ENCODE measurements at regions of chr7 and their contacts with region 1.

Region 1: DNA sequence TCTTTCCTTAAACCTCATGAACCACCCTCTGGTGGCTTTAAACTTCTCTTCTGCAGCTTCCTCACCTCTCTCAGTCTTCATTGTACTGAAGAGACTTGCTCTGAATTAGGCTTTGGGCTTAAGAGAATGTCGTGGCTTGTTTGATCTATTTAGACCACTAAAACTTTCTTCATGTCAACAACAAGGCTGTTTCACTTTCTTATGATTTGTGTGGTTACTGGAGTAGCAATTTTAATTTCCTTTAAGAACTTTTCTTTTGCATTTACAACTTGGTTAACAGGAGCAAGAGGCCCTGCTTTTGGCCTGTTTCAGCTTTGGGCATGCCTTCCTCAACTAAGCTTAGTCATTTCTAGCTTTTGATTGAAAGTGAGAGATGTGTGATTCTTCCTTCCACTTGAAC is 38.1 kb upstream of the CDHR3 start:
- DNase-seq: peak; percentile 46
- ATAC-seq: peak; percentile 92
- H3K4me3 Mint-ChIP-seq: no peak overlapping the region
- H3K27ac Mint-ChIP-seq: peak overlapping the region; percentile 88
- H3K4me1 Mint-ChIP-seq: peaks cover 27% of the 10 kb centered on the region
- H3K27me3 Mint-ChIP-seq: peaks cover 7% of the 10 kb centered on the region

Region 2: DNA sequence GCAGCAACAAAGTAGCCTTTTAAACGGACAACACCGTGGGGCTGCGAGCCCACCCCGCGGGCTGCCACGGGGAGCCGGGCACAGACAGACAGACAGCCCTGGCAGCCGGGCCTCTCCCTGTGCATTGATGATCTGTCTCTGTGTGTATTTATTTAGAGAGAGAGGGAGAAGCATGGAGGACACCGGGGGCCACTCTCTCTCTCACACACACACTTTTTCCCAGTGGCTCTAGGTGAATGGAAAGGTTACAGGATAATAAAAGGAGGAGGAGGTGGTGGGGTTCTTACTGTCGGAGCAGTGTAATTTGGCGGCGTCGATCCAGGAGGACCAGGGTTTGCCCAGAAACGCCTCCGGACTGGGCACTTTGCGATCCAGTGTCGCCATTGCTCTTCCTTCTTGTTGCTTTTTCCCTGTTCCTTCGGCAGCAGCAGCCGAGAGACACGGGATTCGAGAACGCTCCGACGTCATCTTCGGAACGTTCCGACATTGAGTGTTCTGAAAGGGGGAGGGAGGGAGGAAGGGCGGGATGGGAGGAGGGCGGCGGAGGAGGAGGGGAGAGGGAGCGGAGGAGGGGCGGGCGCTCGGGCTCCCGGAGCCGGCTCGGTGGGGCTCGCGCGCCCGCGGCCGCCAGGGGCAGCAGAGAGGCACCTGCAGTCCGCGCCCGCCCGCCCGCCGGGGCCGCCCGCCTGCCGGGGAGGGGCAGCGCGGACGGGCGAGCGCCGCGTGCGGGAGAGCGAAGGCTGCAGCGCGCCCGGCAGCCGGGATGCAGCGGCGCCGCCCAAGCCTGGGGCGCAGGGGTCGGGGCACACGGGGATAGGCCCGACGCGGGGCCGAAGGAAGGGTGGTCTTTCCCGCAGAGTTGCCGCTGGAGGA is 48.6 kb before region 1 on chr7 and contains the start of gene ATXN7L1:
- CTCF ChIA-PET with region 1: interaction called, 14 read pairs
- POLR2A ChIA-PET with region 1: no interaction called
- DNase-seq: peak; percentile 90
- ATAC-seq: peak; percentile 97
- H3K4me3 Mint-ChIP-seq: peak within 1 kb of the TSS; percentile 89
- H3K27ac Mint-ChIP-seq: peak within 1 kb of the TSS; percentile 73
- H3K4me1 Mint-ChIP-seq: peaks cover 20% of the 10 kb centered on the region
- H3K27me3 Mint-ChIP-seq: peaks cover 15% of the 10 kb centered on the region
- total RNA-seq, gene ATXN7L1: 3.5 to 5.0 TPM

Measured in activated CD8-positive, alpha-beta T cell treated with anti-CD3 and anti-CD28 coated beads, Interleukin-2, amount 10 ng/mL, durations not matched to agents 7 days and 5 days (primary cell).